Activated T-helper 1 cell treated with anti-CD3 and anti-CD28 coated beads, Interleukin-12 subunit alpha, Interleukin-12 subunit beta, Interleukin-2, Interleukin-4 antibody, amounts not matched to agents 30 ng/mL and 10 ng/mL and 1 ng/mL, durations not matched to agents 14 hours and 24 hours and 36 hours (primary cell): ENCODE measurements at regions of chr5 and their contacts with region 1.

Region 1: DNA sequence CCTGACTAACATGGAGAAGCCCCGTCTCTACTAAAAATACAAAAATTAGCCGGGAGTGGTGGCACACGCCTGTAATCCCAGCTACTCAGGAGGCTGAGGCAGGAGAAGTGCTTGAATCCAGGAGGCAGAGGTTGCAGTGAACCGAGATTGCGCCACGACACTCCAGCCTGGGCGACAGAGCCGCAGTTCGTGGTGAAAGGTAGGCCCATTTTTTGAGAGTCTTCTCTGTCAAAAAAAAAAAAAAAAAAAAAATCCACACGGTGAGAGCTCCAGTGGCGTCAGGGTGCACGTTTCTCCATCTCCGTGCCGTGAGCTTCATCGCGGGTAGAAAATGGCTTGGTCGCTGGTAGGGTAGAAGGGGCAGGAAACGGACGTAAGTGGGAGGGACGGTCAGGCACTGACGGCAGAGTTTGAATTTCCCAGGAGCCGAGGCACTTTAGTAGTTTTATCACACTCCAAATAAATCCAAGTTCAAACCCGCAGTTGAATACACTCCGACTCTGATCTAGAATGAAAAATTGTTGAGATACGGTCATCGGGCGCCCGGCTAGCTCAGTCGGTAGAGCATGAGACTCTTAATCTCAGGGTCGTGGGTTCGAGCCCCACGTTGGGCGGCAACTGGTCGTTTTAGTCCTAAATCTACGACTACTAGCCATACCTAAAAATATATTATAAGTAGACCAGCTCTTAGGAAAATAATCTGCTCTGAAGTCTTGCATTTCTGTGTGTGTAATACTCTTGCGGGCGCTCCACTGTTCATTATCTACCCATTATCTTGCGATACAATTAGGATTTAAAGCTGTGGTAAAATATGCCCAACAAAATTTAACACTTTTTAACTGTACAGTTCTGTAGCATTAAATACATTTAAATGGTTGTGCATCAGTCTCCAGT is 2.5 kb upstream of the TRIM7 start:
- DNase-seq: peak; percentile 59
- H3K4me3 Mint-ChIP-seq: peak overlapping the region; percentile 89
- H3K27ac Mint-ChIP-seq: peak overlapping the region; percentile 95
- H3K4me1 Mint-ChIP-seq: peaks cover 34% of the 10 kb centered on the region
- H3K27me3 Mint-ChIP-seq: peaks cover 28% of the 10 kb centered on the region

Region 2: GRCh38 chr5:181191529-181192394 is 15.7 kb before region 1 on chr5:
- intact Hi-C with region 1: loop called (anchors 1 kb)
- DNase-seq: peak; percentile 94
- H3K4me3 Mint-ChIP-seq: peak overlapping the region; percentile 94
- H3K27ac Mint-ChIP-seq: peak overlapping the region; percentile 96
- H3K4me1 Mint-ChIP-seq: peaks cover 43% of the 10 kb centered on the region
- H3K27me3 Mint-ChIP-seq: peaks cover 8% of the 10 kb centered on the region

Region 3: GRCh38 chr5:181217803-181218062 is 10.3 kb after region 1 on chr5:
- intact Hi-C with region 1: loop called (anchors 1 kb)
- DNase-seq: no peak
- H3K4me3 Mint-ChIP-seq: peak overlapping the region; percentile 87
- H3K27ac Mint-ChIP-seq: peak overlapping the region; percentile 91
- H3K4me1 Mint-ChIP-seq: peaks cover 58% of the 10 kb centered on the region
- H3K27me3 Mint-ChIP-seq: peaks cover 16% of the 10 kb centered on the region

Region 4: DNA sequence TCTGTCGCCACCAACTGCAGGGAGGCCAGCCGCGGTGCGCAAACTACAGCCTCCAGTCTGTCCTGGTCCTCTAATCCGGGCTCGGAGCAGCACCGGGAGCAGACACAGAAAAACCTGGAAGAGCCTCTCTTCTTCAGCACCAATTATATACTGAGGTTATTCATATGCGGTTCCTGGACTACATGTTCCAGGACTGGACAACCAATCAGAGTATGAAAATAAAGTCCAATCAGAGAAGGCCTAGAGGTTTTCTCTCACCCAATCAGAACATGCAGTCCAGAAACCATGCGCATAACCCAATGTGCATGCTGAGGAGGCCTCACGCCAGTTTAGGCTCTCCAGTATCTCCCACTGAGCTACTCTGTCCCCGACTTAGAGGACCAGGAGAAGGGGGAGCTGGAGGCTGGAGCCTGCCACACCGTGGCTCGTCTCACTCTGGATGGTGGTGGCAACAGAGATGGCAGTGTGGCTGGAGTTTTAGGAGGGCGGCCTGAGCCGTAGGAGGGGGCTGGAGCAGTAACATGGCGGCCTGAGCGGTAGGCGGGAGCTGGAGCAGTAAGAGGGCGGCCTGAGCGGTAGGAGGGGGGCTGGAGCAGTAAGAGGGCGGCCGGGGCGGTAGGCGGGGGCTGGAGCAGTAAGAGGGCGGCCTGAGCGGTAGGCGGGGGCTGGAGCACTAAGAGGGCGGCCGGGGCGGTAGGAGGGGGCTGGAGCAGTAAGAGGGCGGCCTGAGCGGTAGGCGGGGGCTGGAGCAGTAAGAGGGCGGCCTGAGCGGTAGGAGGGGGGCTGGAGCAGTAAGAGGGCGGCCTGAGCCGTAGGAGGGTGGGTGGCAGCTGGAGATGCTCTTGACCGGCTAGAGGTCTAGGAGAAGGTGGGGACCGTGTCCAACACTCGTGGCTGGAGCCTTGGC is 73.9 kb after region 1 on chr5:
- intact Hi-C with region 1: no loop called
- DNase-seq: no peak
- H3K4me3 Mint-ChIP-seq: no peak overlapping the region
- H3K27ac Mint-ChIP-seq: no peak overlapping the region
- H3K4me1 Mint-ChIP-seq: no peaks in the 10 kb centered on the region
- H3K27me3 Mint-ChIP-seq: peaks cover 6% of the 10 kb centered on the region